Activated naive CD4-positive, alpha-beta T cell treated with anti-CD3 and anti-CD28 coated beads for 36 hours (primary cell): ENCODE measurements at regions of chr15 and their contacts with region 1.

Region 1: GRCh38 chr15:84992157-84992944 is 10.7 kb downstream of the PDE8A start:
- DNase-seq: peak; percentile 71
- H3K4me3 Mint-ChIP-seq: peak overlapping the region; percentile 1
- H3K27ac Mint-ChIP-seq: peak overlapping the region; percentile 68
- H3K4me1 Mint-ChIP-seq: peaks cover 62% of the 10 kb centered on the region
- H3K27me3 Mint-ChIP-seq: no peaks in the 10 kb centered on the region

Region 2: DNA sequence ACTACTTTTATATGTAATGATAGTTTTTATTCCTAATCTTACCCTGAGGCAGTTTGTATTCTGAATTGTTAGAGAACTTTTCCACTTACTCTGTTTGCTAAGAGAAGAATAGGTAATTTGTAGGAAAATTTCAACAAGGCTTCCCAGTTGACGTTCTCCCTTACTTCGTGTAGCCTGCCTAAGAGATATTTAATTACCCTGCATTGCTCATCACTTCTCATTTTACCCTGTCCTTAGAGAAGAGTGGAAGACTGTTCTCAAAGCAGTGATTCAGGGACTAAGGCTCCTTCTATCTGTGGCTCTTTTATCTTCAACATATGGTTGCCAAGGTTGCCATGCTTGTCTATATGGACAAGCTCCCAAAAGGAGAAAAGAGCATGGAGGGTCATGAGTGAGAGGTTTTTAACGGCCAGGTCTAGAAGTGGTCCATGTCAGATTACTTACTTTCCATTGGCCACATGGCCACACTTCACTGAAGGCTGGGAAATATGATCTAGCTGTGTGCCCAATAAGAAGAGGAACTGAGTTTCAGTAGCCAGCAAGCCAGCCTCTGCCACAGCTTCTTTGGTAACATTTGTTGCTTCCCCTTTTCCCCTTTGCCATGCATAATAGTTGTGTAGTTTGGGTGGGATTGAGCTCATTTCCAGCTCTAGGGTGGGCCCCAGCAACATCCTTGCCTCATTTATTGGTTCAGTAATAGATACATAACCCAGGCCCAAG is 11.4 kb after region 1 on chr15:
- CTCF ChIA-PET with region 1: interaction called, 3 read pairs
- intact Hi-C with region 1: loop called (anchors 2 kb)
- DNase-seq: no peak
- H3K4me3 Mint-ChIP-seq: no peak overlapping the region
- H3K27ac Mint-ChIP-seq: no peak overlapping the region
- H3K4me1 Mint-ChIP-seq: peaks cover 58% of the 10 kb centered on the region
- H3K27me3 Mint-ChIP-seq: no peaks in the 10 kb centered on the region

Region 3: DNA sequence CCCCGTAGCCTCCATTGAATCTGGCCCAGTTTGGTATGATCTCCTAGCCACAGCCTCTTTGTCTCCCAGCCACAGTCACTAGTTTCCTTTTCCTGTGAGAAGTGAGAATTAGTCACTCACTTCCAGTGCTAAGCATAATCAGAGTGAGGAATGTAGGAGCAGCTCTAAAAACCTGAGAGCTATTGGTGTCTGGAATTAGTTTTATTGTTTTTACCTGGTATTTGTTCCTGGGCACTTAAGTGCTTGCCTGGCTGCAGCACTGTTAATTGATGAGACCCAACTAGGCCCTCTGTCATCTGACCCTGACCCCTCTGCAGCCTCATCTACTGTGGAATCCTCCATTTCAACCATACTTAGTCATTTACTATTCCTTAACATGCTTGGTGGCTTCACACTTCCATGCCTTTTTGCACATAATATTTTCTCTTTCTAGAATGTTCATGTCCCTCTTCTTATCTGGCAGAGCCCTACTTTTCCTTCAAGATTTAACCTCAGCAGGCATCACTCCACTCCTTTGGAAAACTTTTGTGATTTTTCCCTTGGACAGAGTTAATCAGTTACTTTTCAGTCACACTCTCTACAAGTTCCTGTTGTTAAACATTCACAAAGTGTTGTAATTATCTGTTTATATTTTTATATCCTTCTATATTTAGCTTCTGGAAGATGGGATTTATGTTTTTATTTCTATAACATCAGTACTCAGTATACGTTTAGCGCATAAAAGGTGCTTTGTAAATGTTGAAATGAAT is 38.1 kb after region 1 on chr15:
- CTCF ChIA-PET with region 1: no interaction called
- intact Hi-C with region 1: loop called (anchors 2 kb)
- DNase-seq: peak; percentile 31
- H3K4me3 Mint-ChIP-seq: no peak overlapping the region
- H3K27ac Mint-ChIP-seq: no peak overlapping the region
- H3K4me1 Mint-ChIP-seq: peaks cover 51% of the 10 kb centered on the region
- H3K27me3 Mint-ChIP-seq: no peaks in the 10 kb centered on the region